ENCODE measurements at regions of chr16 and their contacts with region 1.

Region 1: GRCh38 chr16:70737377-70738082 is 51.7 kb upstream of the MTSS2 start:
- DNase-seq: peak; percentile 77 to 83
- ATAC-seq: peak; percentile 77 to 89
- H3K4me3 ChIP-seq: peak overlapping the region in 2 of 4 donors; percentile 5 to 34
- H3K27ac ChIP-seq: peak overlapping the region; percentile 86 to 91 (median 90)
- H3K4me1 ChIP-seq: peaks cover 39 to 45% of the 10 kb centered on the region in 2 donors
- H3K27me3 ChIP-seq: no peaks in the 10 kb centered on the region
- CTCF ChIP-seq: no peak
- POLR2A ChIP-seq: peak; percentile 51 to 69

Region 2: GRCh38 chr16:70490261-70490803 is 247.2 kb before region 1 on chr16:
- in situ Hi-C with region 1: no loop called
- intact Hi-C with region 1: no loop called
- DNase-seq: peak; percentile 84 to 85
- ATAC-seq: peak; percentile 93 to 95
- H3K4me3 ChIP-seq: no peak overlapping the region
- H3K27ac ChIP-seq: peak overlapping the region; percentile 25 to 87 (median 74)
- H3K4me1 ChIP-seq: peaks cover 8 to 12% of the 10 kb centered on the region in 2 donors
- H3K27me3 ChIP-seq: no peaks in the 10 kb centered on the region
- CTCF ChIP-seq: peak in 1 of 5 experiments; percentile 15
- POLR2A ChIP-seq: peak in 1 of 2 donors; percentile 36

Region 3: DNA sequence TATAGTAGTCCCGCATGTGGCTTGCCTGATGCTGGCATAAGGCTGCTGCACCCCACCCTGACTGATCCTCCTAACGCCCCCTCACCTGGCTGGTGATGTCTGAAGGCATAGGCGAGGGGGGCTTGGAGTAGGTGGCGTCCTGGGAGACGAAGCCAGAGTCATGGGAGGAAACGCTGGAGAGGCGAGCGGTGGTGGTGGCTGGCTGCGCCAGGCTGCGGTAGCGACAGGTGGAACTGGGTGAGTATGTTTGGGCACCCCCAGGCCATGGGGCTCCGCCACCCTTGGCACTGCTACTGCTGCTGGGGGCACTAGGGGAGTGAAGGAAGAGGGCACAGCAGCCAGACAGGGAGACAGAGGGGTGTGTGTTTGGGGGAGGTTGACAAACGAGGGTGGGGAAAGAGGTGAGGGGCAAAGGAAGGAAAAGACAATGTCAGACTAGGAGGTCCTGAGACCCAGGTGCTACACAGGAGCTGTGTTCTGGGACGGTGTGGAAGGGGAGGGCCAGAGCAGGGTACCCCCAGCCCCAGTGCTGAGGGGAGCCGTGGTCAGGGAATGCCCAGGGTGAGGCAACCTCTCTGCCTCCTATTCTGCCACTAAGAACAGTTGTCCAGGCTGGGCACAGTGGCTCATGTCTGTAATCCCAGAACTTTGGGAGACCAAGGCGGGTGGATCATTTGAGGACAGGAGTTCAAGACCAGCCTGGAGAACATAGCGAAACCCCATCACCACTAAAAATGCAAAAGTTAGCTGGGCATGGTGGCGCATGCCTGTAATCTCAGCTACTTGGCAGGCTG is 63.1 kb before region 1 on chr16:
- in situ Hi-C with region 1: no loop called
- intact Hi-C with region 1: no loop called
- DNase-seq: no peak
- ATAC-seq: no peak
- H3K4me3 ChIP-seq: no peak overlapping the region
- H3K27ac ChIP-seq: no peak overlapping the region
- H3K4me1 ChIP-seq: peaks cover 4 to 5% of the 10 kb centered on the region in 2 donors
- H3K27me3 ChIP-seq: no peaks in the 10 kb centered on the region
- CTCF ChIP-seq: no peak
- POLR2A ChIP-seq: no peak

Region 4: GRCh38 chr16:70685938-70686375 is 51.6 kb before region 1 on chr16 and contains the start of gene MTSS2:
- in situ Hi-C with region 1: loop called in 1 of 4 experiments (anchors 10 kb)
- intact Hi-C with region 1: loop called (anchors 1 kb)
- DNase-seq: peak; percentile 80 to 88
- ATAC-seq: peak; percentile 51 to 63
- H3K4me3 ChIP-seq: peak within 1 kb of the TSS; percentile 70 to 80 (median 72)
- H3K27ac ChIP-seq: peak within 1 kb of the TSS; percentile 88 to 97 (median 94)
- H3K4me1 ChIP-seq: peaks cover 73 to 90% of the 10 kb centered on the region in 2 donors
- H3K27me3 ChIP-seq: no peaks in the 10 kb centered on the region
- CTCF ChIP-seq: peak in 3 of 5 experiments; percentile 3 to 38 (median 29)
- POLR2A ChIP-seq: peak; percentile 83 to 89
- total RNA-seq, gene MTSS2: 42.6 to 160 (median 93.9) TPM

Region 5: GRCh38 chr16:70800781-70801530 is 63.4 kb after region 1 on chr16 and contains the start of gene VAC14:
- in situ Hi-C with region 1: no loop called
- intact Hi-C with region 1: no loop called
- DNase-seq: peak; percentile 84 to 93
- ATAC-seq: peak; percentile 95 to 98
- H3K4me3 ChIP-seq: peak within 1 kb of the TSS; percentile 76 to 94 (median 82)
- H3K27ac ChIP-seq: peak within 1 kb of the TSS; percentile 69 to 80 (median 77)
- H3K4me1 ChIP-seq: peaks cover 9 to 12% of the 10 kb centered on the region in 2 donors
- H3K27me3 ChIP-seq: no peaks in the 10 kb centered on the region
- CTCF ChIP-seq: no peak
- POLR2A ChIP-seq: peak; percentile 61 to 66
- total RNA-seq, gene VAC14: 19.8 to 30.9 (median 27.0) TPM

Measured in gastrocnemius medialis (tissue), 4 donors.